ENCODE measurements at regions of chr2 and their contacts with region 1.

Region 1: GRCh38 chr2:169584005-169584877 is at the start of gene PPIG:
- DNase-seq: peak; percentile 89

Region 2: DNA sequence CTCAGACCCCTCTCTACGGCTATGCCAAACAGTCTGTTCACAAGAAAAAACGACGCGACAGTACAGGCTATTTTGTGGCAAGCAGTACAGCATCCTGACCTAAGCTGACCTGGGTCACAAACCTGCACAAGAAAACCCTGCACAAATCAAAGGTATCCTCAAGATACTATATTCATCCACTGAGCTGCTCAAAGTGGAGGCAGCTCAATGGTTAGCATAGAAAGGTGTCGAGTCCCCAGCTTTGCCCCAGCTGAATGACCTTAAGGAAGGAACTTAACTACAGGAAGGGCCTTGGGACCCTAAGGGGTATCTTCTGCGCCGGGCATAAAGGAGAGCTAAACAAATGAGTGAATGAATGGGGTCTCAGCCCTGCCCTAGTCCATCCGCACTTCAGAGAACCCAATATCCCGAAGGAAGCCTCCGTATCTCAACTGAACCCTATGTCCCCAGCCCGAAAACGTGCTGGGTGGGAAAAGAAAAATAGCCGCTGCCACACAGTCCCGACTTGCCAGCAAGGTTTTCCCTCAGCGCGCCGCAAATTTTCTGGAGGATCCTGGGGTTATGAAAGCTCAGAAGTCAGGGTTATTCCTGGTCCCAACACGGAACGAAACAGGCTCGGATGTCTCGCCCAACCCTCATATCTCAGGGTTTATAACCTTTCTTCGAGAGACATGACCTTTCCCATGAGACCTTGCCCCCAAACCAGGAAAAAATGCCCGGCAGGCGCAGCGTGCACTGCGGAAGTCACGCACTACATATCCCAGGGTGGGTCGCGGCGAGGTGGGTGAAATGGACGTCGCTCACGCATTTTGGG is 10.9 kb before region 1 on chr2 and contains the start of gene FASTKD1:
- CTCF ChIA-PET with region 1: no interaction called
- POLR2A ChIA-PET with region 1: interaction called, 19 read pairs
- DNase-seq: peak; percentile 84

Region 3: GRCh38 chr2:169676357-169676756 is 92.1 kb after region 1 on chr2:
- CTCF ChIA-PET with region 1: no interaction called
- POLR2A ChIA-PET with region 1: no interaction called
- DNase-seq: no peak